ENCODE measurements at regions of chr15 and their contacts with region 1.

Region 1: GRCh38 chr15:63188926-63189871 is at the start of gene RAB8B:
- DNase-seq: peak; percentile 92 to 96 (median 93)
- H3K4me3 ChIP-seq: peak within 1 kb of the TSS; percentile 75 to 80
- H3K4me3 Mint-ChIP-seq: peak within 1 kb of the TSS; percentile 95 to 99 (median 98)
- H3K27ac ChIP-seq: peak within 1 kb of the TSS; percentile 93
- H3K27ac Mint-ChIP-seq: peak within 1 kb of the TSS; percentile 87 to 100 (median 98)
- H3K4me1 ChIP-seq: peaks cover 44% of the 10 kb centered on the region
- H3K4me1 Mint-ChIP-seq: peaks cover 37 to 56% (median 44%) of the 10 kb centered on the region in 4 donors
- H3K27me3 ChIP-seq: no peaks in the 10 kb centered on the region
- H3K27me3 Mint-ChIP-seq: no peaks in the 10 kb centered on the region
- total RNA-seq, gene RAB8B: 86.0 to 86.4 TPM

Region 2: DNA sequence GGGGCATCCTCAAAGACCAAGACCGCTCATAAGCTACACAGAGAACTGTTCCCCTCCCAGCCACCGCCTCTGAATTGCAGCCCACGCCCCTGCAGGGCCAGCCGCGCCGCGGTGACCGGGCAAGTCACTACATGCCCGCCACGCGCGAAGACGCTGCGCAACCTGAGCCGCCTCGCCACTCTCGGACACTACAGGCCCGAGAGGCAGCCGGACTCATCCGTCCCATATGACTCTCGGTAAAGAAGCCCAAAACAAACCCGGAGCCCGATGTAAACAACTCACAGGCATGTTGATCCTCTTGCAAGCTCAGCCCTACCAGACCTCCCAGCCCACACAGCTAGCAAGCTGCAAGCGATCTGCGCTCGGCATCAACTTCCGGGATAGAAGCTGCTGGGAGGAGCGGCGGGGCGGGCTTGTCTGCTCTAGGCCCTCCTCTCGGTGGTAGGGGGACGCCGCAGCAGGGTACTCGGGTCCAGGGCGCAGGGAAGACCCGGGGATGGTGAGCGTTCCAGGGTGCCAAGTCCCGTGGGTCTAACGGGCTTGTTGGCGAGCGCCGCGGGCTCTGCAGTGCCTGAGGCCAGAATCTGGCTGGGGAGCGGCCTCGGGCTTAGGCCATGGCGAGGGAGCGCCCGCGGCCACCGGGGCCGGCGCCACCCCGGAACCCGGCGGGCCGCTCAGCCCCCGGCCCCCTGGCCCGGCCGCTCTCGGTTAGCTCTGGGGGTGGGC is 31.9 kb before region 1 on chr15 and contains the start of gene RPS27L:
- CTCF ChIA-PET with region 1: interaction called, 5 read pairs
- POLR2A ChIA-PET with region 1: interaction called, 96 read pairs
- intact Hi-C with region 1: loop called (anchors 1 kb)
- DNase-seq: peak; percentile 85 to 94 (median 87)
- H3K4me3 ChIP-seq: peak within 1 kb of the TSS; percentile 53 to 88
- H3K4me3 Mint-ChIP-seq: peak within 1 kb of the TSS; percentile 97 to 100 (median 100)
- H3K27ac ChIP-seq: peak within 1 kb of the TSS; percentile 74
- H3K27ac Mint-ChIP-seq: peak within 1 kb of the TSS; percentile 89 to 99 (median 98)
- H3K4me1 ChIP-seq: peaks cover 29% of the 10 kb centered on the region
- H3K4me1 Mint-ChIP-seq: peaks cover 14 to 32% (median 24%) of the 10 kb centered on the region in 4 donors
- H3K27me3 ChIP-seq: no peaks in the 10 kb centered on the region
- H3K27me3 Mint-ChIP-seq: no peaks in the 10 kb centered on the region
- total RNA-seq, gene RPS27L: 150 to 161 TPM

Region 3: GRCh38 chr15:63203451-63204090 is 14.4 kb after region 1 on chr15:
- CTCF ChIA-PET with region 1: interaction called, 9 read pairs
- POLR2A ChIA-PET with region 1: interaction called, 59 read pairs
- intact Hi-C with region 1: loop called (anchors 1 kb)
- DNase-seq: peak; percentile 35 to 80 (median 56)
- H3K4me3 ChIP-seq: no peak overlapping the region
- H3K4me3 Mint-ChIP-seq: peak overlapping the region in 7 of 8 donors; percentile 10 to 69 (median 33)
- H3K27ac ChIP-seq: no peak overlapping the region
- H3K27ac Mint-ChIP-seq: peak overlapping the region in 6 of 7 donors; percentile 32 to 86 (median 67)
- H3K4me1 ChIP-seq: peaks cover 90% of the 10 kb centered on the region
- H3K4me1 Mint-ChIP-seq: peaks cover 71 to 98% (median 87%) of the 10 kb centered on the region in 4 donors
- H3K27me3 ChIP-seq: no peaks in the 10 kb centered on the region
- H3K27me3 Mint-ChIP-seq: no peaks in the 10 kb centered on the region

Region 4: DNA sequence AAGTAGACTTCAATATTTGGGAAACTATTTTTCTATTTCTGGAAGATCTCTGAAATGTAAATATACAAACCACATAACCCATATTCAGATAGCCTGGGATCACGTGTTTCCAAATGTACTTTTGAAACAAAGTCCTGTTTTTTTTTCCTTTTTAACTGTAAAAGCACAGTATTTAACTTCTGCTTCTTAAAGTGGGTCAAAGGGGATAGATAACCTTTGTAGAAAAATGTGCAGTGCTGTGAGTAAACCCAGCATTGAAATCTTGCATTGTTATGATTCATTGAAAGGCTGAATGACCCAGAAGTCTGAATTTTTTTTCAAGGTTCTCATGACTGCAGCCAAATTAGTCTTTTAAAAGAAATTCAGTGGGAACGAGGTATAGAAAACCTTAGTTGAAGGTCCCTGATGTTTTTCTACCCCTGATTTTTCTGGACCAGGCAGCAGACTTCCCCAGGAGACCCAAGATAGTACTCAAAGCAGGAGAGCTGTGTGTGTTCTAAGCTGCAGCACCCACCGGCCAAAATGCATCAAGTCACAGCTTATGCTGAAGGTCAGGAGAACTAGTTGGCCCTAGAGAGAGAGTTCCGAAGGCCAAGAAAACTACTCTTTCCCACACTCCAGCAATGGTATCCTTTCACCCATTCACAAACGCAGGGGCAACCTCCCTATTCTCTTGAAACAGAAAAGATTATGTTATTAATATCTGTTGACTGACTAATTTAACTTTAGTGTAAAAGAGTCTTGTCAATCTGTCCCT is 44.6 kb after region 1 on chr15:
- CTCF ChIA-PET with region 1: interaction called, 62 read pairs
- POLR2A ChIA-PET with region 1: interaction called, 161 read pairs
- intact Hi-C with region 1: loop called (anchors 1 kb)
- DNase-seq: no peak
- H3K4me3 ChIP-seq: no peak overlapping the region
- H3K4me3 Mint-ChIP-seq: peak overlapping the region in 3 of 8 donors; percentile 7 to 52 (median 38)
- H3K27ac ChIP-seq: no peak overlapping the region
- H3K27ac Mint-ChIP-seq: peak overlapping the region in 6 of 7 donors; percentile 42 to 90 (median 82)
- H3K4me1 ChIP-seq: peaks cover 78% of the 10 kb centered on the region
- H3K4me1 Mint-ChIP-seq: peaks cover 53 to 79% (median 63%) of the 10 kb centered on the region in 4 donors
- H3K27me3 ChIP-seq: no peaks in the 10 kb centered on the region
- H3K27me3 Mint-ChIP-seq: no peaks in the 10 kb centered on the region

Region 5: GRCh38 chr15:63277038-63277892 is 88.1 kb after region 1 on chr15 and contains the start of gene APH1B:
- CTCF ChIA-PET with region 1: interaction called, 4 read pairs
- POLR2A ChIA-PET with region 1: interaction called, 94 read pairs
- intact Hi-C with region 1: loop called (anchors 1 kb)
- DNase-seq: peak; percentile 75 to 83 (median 77)
- H3K4me3 ChIP-seq: peak within 1 kb of the TSS; percentile 66 to 84
- H3K4me3 Mint-ChIP-seq: peak within 1 kb of the TSS; percentile 84 to 90 (median 88)
- H3K27ac ChIP-seq: peak within 1 kb of the TSS; percentile 68
- H3K27ac Mint-ChIP-seq: peak within 1 kb of the TSS; percentile 79 to 94 (median 92)
- H3K4me1 ChIP-seq: peaks cover 31% of the 10 kb centered on the region
- H3K4me1 Mint-ChIP-seq: peaks cover 19 to 46% (median 31%) of the 10 kb centered on the region in 4 donors
- H3K27me3 ChIP-seq: no peaks in the 10 kb centered on the region
- H3K27me3 Mint-ChIP-seq: no peaks in the 10 kb centered on the region
- total RNA-seq, gene APH1B: 23.0 to 28.4 TPM